ENCODE measurements at regions of chr11 and their contacts with region 1.

Region 1: DNA sequence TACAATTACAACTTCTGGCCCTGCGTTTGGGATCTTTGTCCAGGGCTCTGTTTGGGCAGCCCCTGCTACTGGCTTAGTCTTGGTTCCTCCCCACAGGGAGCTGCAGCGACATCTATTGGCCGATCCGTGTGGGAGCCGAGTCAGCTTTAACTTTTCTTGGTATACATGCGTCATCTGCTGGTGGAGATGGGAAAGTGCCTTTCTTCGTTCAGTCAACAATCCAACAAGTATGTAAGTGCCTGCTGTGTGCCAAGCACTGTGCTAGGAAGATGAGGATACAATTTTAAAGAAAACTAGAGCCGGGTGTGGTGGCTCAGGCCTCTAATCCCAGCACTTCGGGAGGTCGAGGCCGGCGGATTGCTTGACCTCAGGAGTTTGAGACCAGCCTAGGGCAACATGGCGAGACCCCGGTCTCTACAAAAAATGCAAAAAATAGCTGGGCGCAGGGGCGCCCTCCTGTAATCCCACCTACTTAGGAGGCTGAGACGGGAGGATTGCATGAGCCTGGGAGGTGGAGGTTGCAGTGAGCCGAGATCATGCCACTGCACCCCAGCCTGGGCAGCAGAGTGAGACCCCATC is 8.2 kb downstream of the TPBGL start:
- DNase-seq: peak; percentile 81 to 87 (median 84)
- H3K4me3 ChIP-seq: no peak overlapping the region
- H3K4me3 Mint-ChIP-seq: no peak overlapping the region
- H3K27ac ChIP-seq: no peak overlapping the region
- H3K27ac Mint-ChIP-seq: peak overlapping the region in 1 of 7 donors; percentile 47
- H3K4me1 ChIP-seq: no peaks in the 10 kb centered on the region
- H3K4me1 Mint-ChIP-seq: peaks cover 0 to 3% (median 1%) of the 10 kb centered on the region in 4 donors
- H3K27me3 ChIP-seq: no peaks in the 10 kb centered on the region
- H3K27me3 Mint-ChIP-seq: peaks cover 10 to 14% of the 10 kb centered on the region in 2 donors

Region 2: DNA sequence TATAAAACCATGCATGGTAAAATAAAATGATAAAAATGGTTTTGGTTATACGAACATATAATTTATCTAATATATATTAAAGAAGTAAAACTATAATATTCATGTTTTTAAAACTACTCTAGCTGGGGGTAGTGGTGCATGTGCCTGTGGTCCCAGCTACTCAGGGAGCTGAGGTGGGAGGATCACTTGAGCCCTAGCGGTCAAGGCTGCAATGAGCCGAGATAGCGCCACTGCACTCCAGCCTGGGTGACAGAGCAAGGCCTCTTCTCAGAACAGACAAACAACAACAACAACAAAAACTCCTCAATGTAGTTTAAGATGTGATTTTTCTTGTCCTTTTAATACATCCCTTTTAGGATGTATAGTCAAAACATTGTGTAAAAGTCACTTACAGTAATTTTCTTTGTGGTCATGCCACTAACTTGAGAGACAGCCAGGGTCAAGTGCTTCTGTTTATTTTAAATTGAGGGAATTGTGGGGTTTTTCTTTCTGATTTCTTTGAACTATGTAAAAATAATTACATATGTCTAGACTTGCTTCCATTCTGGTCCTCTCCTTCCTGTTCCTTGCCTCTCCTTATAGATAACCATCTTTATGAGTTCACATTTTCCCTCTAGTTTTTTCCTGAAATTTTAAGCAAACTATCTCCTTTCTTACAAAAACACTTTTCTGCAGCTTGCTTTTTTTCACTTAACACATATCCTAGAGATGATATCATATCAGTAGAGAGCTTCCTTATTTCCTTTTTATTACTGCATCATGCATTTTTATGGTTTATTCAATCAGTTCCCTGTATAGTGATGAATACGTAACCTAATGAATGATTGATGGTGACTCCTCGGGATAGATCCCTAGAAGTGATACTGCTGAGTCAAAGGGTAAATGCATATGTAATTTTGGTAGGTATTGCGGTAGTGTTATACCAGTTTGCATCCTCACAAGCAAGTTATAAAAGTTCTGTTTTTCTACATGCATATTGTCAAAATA is 161.2 kb before region 1 on chr11:
- CTCF ChIA-PET with region 1: no interaction called
- POLR2A ChIA-PET with region 1: no interaction called
- intact Hi-C with region 1: no loop called
- DNase-seq: no peak
- H3K4me3 ChIP-seq: no peak overlapping the region
- H3K4me3 Mint-ChIP-seq: no peak overlapping the region
- H3K27ac ChIP-seq: no peak overlapping the region
- H3K27ac Mint-ChIP-seq: no peak overlapping the region
- H3K4me1 ChIP-seq: no peaks in the 10 kb centered on the region
- H3K4me1 Mint-ChIP-seq: no peaks in the 10 kb centered on the region
- H3K27me3 ChIP-seq: no peaks in the 10 kb centered on the region
- H3K27me3 Mint-ChIP-seq: peaks cover 24 to 25% of the 10 kb centered on the region in 2 donors

Region 3: DNA sequence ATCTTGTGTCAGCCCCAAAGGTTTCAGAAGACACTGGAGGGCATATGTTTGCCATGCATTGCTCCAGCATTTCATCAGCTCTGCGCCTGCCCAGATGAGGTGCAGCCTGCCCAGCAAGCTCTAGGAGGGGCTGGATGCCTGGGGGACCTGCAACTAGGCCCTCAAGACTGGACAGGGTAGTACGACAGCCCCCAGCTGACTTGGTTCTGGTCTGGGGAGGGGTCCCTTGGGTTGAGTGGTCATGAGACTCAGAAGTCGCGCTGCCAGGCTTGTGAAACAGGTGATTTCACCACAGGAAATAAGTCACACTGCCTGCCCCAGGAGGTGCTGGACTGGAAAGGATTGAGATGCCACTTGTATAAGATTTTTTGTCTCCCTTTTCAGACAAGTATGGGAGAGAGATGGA is 15.2 kb after region 1 on chr11:
- CTCF ChIA-PET with region 1: interaction called, 270 read pairs
- POLR2A ChIA-PET with region 1: interaction called, 7 read pairs
- intact Hi-C with region 1: no loop called
- DNase-seq: peak in 1 of 5 donors; percentile 40
- H3K4me3 ChIP-seq: no peak overlapping the region
- H3K4me3 Mint-ChIP-seq: peak overlapping the region in 1 of 8 donors; percentile 11
- H3K27ac ChIP-seq: no peak overlapping the region
- H3K27ac Mint-ChIP-seq: peak overlapping the region; percentile 2 to 75 (median 50)
- H3K4me1 ChIP-seq: peaks cover 39% of the 10 kb centered on the region
- H3K4me1 Mint-ChIP-seq: peaks cover 26 to 60% (median 40%) of the 10 kb centered on the region in 4 donors
- H3K27me3 ChIP-seq: no peaks in the 10 kb centered on the region
- H3K27me3 Mint-ChIP-seq: no peaks in the 10 kb centered on the region

Region 4: DNA sequence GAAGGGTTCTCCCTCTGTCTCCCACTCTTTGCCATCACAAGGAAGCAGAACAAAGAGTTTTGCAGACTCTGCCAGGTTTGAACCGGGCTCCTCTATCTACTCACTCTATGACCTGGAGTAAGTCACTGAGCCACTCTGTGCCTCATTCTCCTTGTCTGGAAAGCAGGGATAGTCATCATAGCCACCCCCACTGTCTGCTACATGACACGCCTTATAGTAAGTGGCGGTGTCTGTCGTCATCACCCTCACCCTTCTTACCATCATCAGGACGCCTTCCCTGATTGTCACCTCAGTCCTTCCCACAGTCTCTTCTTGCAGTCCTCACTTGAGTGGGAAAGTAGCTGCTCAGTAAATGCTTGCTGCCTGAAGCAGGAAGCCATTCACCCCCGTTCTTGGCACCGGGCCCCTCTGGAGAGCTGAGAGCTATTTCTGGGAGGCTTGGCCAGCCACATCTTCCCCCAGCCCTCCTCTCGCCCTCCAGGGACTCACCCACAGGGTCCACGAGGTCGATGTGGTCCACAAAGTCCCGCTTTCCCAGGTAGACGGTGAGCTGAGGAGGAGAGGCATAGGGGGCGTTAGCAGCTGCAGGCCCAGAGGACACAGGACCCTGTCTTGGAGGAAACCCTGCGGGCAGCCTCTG is 38.2 kb after region 1 on chr11:
- CTCF ChIA-PET with region 1: no interaction called
- POLR2A ChIA-PET with region 1: no interaction called
- intact Hi-C with region 1: no loop called
- DNase-seq: no peak
- H3K4me3 ChIP-seq: no peak overlapping the region
- H3K4me3 Mint-ChIP-seq: no peak overlapping the region
- H3K27ac ChIP-seq: no peak overlapping the region
- H3K27ac Mint-ChIP-seq: peak overlapping the region in 6 of 7 donors; percentile 19 to 74 (median 40)
- H3K4me1 ChIP-seq: no peaks in the 10 kb centered on the region
- H3K4me1 Mint-ChIP-seq: peaks cover 0 to 6% (median 0%) of the 10 kb centered on the region in 4 donors
- H3K27me3 ChIP-seq: no peaks in the 10 kb centered on the region
- H3K27me3 Mint-ChIP-seq: no peaks in the 10 kb centered on the region